AG04450 (cell line): ENCODE measurements at regions of chr9 and their contacts with region 1.

Region 1: GRCh38 chr9:73200694-73201452 is 49.2 kb downstream of the ANXA1 start:
- DNase-seq: no peak
- H3K4me3 ChIP-seq: no peak overlapping the region
- H3K27ac ChIP-seq: no peak overlapping the region
- H3K27me3 ChIP-seq: no peaks in the 10 kb centered on the region
- CTCF ChIP-seq: peak; percentile 61

Region 2: GRCh38 chr9:73104342-73104741 is 96.5 kb before region 1 on chr9:
- CTCF ChIA-PET with region 1: interaction called, 24 read pairs
- POLR2A ChIA-PET with region 1: no interaction called
- DNase-seq: no peak
- H3K4me3 ChIP-seq: no peak overlapping the region
- H3K27ac ChIP-seq: no peak overlapping the region
- H3K27me3 ChIP-seq: no peaks in the 10 kb centered on the region
- CTCF ChIP-seq: no peak

Region 3: DNA sequence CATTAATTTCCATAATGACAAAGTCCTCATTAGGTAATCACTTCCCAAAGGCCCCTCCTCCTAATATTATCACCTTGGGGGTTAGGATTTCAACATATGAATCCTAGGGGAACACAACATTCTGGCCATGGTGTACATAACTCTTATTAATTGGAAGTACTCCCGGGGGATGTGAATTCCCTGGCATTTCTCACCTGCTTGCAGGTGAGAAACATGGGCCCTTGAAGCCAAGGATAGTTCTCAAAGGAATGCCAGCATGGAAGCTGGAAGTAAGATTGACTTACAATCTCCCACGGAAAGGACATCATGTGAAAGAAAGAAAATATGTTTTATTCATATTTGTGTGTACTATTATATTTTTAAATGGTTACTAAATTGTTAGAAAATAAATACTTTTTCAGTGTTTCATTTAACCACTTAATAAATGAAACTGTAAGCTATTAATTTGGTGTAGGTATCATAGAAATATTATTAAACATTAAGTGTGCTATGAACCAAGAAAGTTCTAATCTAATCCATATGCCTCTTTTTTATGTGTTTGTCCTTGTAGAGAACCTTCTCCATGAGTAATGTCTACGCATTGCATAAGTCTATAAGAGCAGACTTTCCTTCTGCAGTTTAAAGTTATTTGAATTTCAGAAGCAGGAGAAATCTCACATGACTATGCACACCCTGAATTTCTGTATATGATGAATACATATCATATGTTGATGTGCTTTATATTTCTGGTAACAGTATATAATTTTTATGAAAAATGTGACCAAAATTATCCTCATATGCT is 10.2 kb after region 1 on chr9:
- CTCF ChIA-PET with region 1: interaction called, 25 read pairs
- POLR2A ChIA-PET with region 1: no interaction called
- DNase-seq: no peak
- H3K4me3 ChIP-seq: no peak overlapping the region
- H3K27ac ChIP-seq: no peak overlapping the region
- H3K27me3 ChIP-seq: no peaks in the 10 kb centered on the region
- CTCF ChIP-seq: no peak

Region 4: GRCh38 chr9:74570879-74571512 is 1370.1 kb after region 1 on chr9:
- CTCF ChIA-PET with region 1: interaction called, 52 read pairs
- POLR2A ChIA-PET with region 1: interaction called, 15 read pairs
- DNase-seq: no peak
- H3K4me3 ChIP-seq: no peak overlapping the region
- H3K27ac ChIP-seq: no peak overlapping the region
- H3K27me3 ChIP-seq: no peaks in the 10 kb centered on the region
- CTCF ChIP-seq: peak; percentile 73

Region 5: GRCh38 chr9:74742792-74743730 is 1542.2 kb after region 1 on chr9:
- CTCF ChIA-PET with region 1: interaction called, 37 read pairs
- POLR2A ChIA-PET with region 1: no interaction called
- DNase-seq: peak; percentile 15
- H3K4me3 ChIP-seq: no peak overlapping the region
- H3K27ac ChIP-seq: no peak overlapping the region
- H3K27me3 ChIP-seq: peaks cover 7% of the 10 kb centered on the region
- CTCF ChIP-seq: peak; percentile 83